Activated T-helper 1 cell treated with anti-CD3 and anti-CD28 coated beads, Interleukin-12 subunit alpha, Interleukin-12 subunit beta, Interleukin-2, Interleukin-4 antibody, amounts not matched to agents 30 ng/mL and 10 ng/mL and 1 ng/mL, durations not matched to agents 14 hours and 24 hours and 36 hours (primary cell): ENCODE measurements at regions of chr2 and their contacts with region 1.

Region 1: GRCh38 chr2:70301344-70302194 is at the start of gene FAM136A:
- DNase-seq: peak; percentile 85
- H3K4me3 Mint-ChIP-seq: peak within 1 kb of the TSS; percentile 91
- H3K27ac Mint-ChIP-seq: peak within 1 kb of the TSS; percentile 93
- H3K4me1 Mint-ChIP-seq: peaks cover 41% of the 10 kb centered on the region
- H3K27me3 Mint-ChIP-seq: peaks cover 6% of the 10 kb centered on the region
- total RNA-seq, gene FAM136A: 88.9 and 89.1 TPM in 2 replicates

Region 2: GRCh38 chr2:70340921-70341765 is 39.6 kb after region 1 on chr2:
- intact Hi-C with region 1: loop called (anchors 1 kb)
- DNase-seq: peak; percentile 16
- H3K4me3 Mint-ChIP-seq: no peak overlapping the region
- H3K27ac Mint-ChIP-seq: no peak overlapping the region
- H3K4me1 Mint-ChIP-seq: no peaks in the 10 kb centered on the region
- H3K27me3 Mint-ChIP-seq: no peaks in the 10 kb centered on the region

Region 3: GRCh38 chr2:70403267-70404053 is 101.9 kb after region 1 on chr2:
- intact Hi-C with region 1: no loop called
- DNase-seq: no peak
- H3K4me3 Mint-ChIP-seq: no peak overlapping the region
- H3K27ac Mint-ChIP-seq: no peak overlapping the region
- H3K4me1 Mint-ChIP-seq: no peaks in the 10 kb centered on the region
- H3K27me3 Mint-ChIP-seq: peaks cover 12% of the 10 kb centered on the region

Region 4: GRCh38 chr2:70616168-70616694 is 314.7 kb after region 1 on chr2:
- intact Hi-C with region 1: loop called (anchors 1 kb)
- DNase-seq: no peak
- H3K4me3 Mint-ChIP-seq: no peak overlapping the region
- H3K27ac Mint-ChIP-seq: no peak overlapping the region
- H3K4me1 Mint-ChIP-seq: peaks cover 6% of the 10 kb centered on the region
- H3K27me3 Mint-ChIP-seq: peaks cover 11% of the 10 kb centered on the region

Region 5: DNA sequence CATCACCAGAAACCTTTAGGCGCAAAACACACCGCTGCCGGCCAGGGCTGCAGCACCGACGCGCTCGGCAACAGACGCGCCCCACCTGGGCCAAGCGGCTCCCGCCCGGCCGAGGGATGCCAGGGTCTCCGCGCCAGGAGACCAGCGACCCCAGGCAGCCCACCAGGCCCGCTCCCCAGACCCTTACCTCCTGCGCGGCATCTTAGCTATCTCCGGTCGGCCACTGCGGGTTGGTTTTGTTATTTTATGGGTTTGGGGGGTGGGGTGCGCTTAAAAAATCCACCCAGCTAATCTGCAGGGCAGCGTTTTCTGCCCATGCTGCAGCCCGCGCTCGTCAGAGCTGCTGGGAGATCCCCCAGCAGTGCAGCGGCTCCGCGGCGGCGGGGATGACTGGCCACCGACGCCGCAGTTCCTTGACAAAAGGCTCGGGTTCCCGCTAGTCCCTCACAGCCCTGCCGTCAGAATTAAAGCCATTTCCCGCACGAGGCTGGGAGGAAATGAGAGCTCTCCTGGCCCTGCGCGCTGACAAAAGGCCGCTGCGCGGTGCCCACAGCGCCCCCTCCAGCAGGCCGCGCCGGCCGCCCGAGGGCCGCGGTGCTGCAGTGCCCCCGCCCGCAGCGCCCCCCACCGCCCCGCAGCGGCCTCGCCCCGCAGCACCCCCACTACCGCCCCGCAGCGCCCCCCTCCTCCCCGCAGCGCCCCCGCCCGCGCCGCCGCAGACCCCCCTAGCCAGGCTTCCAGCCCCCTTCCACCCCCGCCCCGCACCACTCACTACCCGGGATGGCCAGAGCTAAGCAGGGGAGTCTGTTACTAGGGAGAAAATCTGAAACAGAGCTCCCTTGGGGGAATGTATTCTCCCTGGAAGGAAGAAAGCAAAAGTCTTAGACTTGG is 466.4 kb after region 1 on chr2 and contains the start of gene ADD2:
- intact Hi-C with region 1: loop called (anchors 5 kb)
- DNase-seq: peak; percentile 48
- H3K4me3 Mint-ChIP-seq: peak within 1 kb of the TSS; percentile 89
- H3K27ac Mint-ChIP-seq: peak within 1 kb of the TSS; percentile 76
- H3K4me1 Mint-ChIP-seq: peaks cover 26% of the 10 kb centered on the region
- H3K27me3 Mint-ChIP-seq: peaks cover 37% of the 10 kb centered on the region
- total RNA-seq, gene ADD2: 6.9 and 9.0 TPM in 2 replicates

Region 6: DNA sequence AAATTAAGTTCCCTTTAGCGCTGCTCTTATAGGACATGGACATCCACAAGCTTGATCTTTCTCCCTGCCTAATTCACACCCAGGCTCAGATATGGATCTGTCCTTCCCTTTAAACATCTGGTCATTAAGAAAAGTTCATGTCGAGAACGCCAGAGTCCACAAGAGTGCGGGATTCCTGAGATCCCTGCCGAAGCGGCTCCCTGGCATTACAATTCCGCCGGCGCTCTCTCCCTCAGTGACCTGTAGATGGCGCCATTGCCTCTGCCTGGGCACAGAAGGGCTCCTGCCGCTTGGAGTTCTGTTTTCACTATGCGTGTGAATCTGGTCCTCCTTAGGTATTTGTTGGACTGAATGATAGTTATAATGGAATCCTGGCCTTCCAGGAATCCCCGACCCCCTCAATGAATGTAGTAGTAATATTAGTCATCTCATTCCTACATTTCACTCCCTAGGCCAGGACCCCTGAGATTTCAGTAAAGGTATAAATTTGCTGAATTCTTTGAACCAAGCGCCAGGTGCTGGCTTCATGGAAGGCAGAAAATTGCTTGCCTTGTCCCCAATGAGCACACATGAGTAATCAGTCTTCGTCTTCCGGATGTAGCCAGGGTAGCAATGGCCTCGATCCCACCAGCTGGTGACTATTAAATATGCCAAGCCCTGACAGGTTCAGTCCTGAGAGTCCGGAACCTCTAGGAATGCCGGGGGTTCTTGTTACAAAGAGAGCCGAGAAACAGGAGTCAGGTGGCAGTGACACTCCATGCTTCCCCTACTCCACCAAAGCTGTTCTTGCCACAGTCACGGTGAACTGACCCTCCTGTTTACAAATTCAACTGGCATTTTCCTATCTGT is 560.4 kb after region 1 on chr2:
- intact Hi-C with region 1: loop called (anchors 10 kb)
- DNase-seq: peak; percentile 67
- H3K4me3 Mint-ChIP-seq: peak overlapping the region; percentile 8
- H3K27ac Mint-ChIP-seq: no peak overlapping the region
- H3K4me1 Mint-ChIP-seq: peaks cover 6% of the 10 kb centered on the region
- H3K27me3 Mint-ChIP-seq: peaks cover 14% of the 10 kb centered on the region

Region 7: DNA sequence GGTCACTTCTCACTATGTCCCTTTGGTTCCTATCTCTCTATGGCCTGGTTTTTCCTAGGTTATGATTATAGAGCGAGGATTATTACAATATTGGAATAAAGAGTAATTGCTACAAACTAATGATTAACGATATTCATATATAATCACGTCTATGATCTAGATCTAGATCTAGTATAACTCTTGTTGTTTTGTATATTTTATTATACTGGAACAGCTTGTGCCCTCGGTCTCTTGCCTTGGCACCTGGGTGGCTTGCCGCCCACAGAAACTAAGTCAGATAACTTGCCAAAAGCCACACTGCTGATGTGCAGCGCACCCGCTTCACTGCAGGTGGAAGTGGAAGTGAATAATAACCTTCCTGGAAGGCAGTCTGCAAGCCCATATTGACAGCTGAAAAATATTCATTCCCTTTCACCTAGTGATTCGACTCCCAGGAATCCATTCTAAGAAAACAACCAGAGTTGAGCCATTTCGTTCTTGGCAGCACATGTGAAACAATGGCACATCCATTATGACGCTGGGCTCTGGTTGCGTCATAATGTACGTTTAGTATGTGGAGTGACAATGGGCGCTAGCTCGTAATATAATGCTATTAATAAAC is 676.1 kb after region 1 on chr2:
- intact Hi-C with region 1: loop called (anchors 5 kb)
- DNase-seq: no peak
- H3K4me3 Mint-ChIP-seq: peak overlapping the region; percentile 78
- H3K27ac Mint-ChIP-seq: no peak overlapping the region
- H3K4me1 Mint-ChIP-seq: peaks cover 18% of the 10 kb centered on the region
- H3K27me3 Mint-ChIP-seq: peaks cover under 1% of the 10 kb centered on the region

Region 8: GRCh38 chr2:71226965-71227560 is 925.5 kb after region 1 on chr2 and contains the start of gene PAIP2B:
- intact Hi-C with region 1: loop called (anchors 10 kb)
- DNase-seq: peak; percentile 97
- H3K4me3 Mint-ChIP-seq: peak within 1 kb of the TSS; percentile 91
- H3K27ac Mint-ChIP-seq: peak within 1 kb of the TSS; percentile 54
- H3K4me1 Mint-ChIP-seq: peaks cover 12% of the 10 kb centered on the region
- H3K27me3 Mint-ChIP-seq: peaks cover 10% of the 10 kb centered on the region
- total RNA-seq, gene PAIP2B: 0.41 and 0.44 TPM in 2 replicates